ENCODE measurements at regions of chr7 and their contacts with region 1.

Region 1: GRCh38 chr7:92621026-92621540 is 30.9 kb upstream of the FAM133B start:
- DNase-seq: peak; percentile 85

Region 2: DNA sequence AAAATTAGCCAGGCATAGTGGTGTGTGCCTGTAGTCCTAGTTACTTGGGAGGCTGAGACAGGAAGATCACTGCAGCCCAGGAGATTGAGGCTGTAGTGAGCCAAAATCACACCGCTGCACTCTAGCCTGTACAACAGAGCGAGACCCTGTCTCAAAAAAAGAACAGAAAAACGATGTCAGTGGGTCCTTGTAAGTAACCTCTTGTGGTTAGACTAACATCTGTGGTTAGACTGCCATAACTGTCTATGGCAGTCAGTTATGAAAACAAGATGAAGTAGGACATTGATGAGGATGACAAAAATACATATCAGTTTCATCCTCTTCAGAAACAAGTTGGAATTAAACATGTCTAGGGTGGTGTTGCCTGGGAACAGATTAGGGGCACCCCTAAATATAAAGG is 627.1 kb before region 1 on chr7:
- in situ Hi-C with region 1: no loop called
- DNase-seq: no peak

Region 3: DNA sequence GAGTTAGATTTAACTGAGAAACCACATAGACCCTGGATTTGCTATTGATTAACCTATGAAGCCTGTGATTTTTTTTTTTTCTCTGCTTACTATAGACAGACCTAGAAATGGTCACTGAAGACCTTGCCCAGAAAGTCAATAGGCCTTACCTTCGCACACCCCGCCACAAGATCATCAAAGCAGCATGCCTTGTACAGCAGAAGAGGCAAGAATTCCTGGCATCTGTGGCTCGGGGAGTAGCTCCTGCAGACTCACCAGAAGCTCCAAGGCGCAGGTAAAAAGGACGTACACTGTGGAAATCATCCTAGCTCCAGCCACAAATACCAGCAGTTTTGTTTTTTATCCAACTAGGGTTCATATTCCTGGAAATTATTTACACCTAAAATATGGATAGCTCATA is 230.0 kb before region 1 on chr7:
- in situ Hi-C with region 1: no loop called
- DNase-seq: no peak

Region 4: GRCh38 chr7:93043385-93043985 is 422.4 kb after region 1 on chr7:
- in situ Hi-C with region 1: loop called (anchors 25 kb)
- DNase-seq: no peak